ENCODE measurements at regions of chr17 and their contacts with region 1.

Region 1: DNA sequence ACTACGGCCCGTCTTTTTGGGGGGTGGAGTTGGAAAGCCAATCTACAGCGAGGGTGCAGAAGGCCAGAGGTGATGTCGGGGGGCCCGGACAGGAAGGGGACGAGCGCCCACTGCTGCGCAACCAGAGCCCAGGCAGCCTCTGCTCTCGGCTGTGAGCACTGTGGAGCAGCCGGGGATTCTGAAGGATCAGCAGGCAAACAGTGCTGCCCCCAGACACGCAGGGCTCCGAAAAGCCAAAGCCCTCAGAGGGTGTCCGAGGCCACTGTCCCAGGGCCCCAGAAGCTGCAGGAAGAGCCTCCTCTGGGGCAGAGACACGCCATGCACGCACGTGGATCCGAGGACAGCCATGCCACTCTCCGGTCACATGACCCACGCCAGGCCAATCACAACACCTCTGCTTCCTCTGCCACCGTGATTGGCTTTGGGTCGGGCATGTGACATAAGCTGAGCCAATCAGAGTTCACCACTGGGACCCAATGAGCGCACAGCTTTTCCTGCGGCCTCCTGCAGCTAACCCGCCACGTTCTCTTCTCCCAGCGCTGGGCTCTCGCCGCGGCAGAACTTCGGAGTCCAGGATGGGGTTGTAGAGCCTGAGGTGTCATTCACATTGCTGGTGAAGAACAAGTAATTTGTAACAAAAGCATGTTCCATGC is 40.7 kb downstream of the ACTG1 start:
- DNase-seq: no peak
- ATAC-seq: peak; percentile 31

Region 2: GRCh38 chr17:81354954-81355347 is 117.0 kb before region 1 on chr17:
- intact Hi-C with region 1: no loop called
- DNase-seq: no peak
- ATAC-seq: no peak

Region 3: DNA sequence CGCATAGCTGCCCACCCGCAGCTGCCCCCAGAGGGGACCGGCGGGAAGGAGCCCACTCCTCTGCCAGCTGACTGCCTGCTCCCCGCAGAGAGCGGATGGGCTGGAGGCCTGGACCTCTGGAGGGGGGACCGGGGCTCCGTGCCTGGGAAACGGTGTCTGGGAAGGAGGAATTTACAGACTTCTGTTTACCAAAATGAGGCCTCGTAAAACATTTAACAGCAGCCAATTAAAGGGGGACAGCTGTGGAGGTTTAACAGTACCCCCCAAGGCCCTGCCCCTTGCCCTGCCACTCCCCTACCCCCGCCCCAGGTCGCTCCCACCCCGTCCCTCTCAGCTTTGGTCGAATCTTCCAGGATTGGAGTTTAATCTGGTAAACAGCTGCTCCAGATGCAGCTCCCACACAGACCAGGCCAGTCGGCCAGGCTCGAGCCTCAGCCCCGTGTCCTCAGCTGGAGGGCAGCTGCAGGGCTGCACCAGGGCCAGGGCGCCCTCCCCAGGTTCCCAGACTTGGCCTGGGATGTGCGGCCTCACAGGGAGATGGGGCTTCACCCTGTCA is 35.6 kb before region 1 on chr17:
- intact Hi-C with region 1: loop called (anchors 5 kb)
- DNase-seq: peak; percentile 79
- ATAC-seq: peak; percentile 75

Region 4: GRCh38 chr17:81576621-81577277 is 104.8 kb after region 1 on chr17:
- intact Hi-C with region 1: no loop called
- DNase-seq: no peak
- ATAC-seq: no peak

Measured in Right ventricle myocardium superior (tissue), 1 donor.